PC-3 (cell line): ENCODE measurements at regions of chr22 and their contacts with region 1.

Region 1: DNA sequence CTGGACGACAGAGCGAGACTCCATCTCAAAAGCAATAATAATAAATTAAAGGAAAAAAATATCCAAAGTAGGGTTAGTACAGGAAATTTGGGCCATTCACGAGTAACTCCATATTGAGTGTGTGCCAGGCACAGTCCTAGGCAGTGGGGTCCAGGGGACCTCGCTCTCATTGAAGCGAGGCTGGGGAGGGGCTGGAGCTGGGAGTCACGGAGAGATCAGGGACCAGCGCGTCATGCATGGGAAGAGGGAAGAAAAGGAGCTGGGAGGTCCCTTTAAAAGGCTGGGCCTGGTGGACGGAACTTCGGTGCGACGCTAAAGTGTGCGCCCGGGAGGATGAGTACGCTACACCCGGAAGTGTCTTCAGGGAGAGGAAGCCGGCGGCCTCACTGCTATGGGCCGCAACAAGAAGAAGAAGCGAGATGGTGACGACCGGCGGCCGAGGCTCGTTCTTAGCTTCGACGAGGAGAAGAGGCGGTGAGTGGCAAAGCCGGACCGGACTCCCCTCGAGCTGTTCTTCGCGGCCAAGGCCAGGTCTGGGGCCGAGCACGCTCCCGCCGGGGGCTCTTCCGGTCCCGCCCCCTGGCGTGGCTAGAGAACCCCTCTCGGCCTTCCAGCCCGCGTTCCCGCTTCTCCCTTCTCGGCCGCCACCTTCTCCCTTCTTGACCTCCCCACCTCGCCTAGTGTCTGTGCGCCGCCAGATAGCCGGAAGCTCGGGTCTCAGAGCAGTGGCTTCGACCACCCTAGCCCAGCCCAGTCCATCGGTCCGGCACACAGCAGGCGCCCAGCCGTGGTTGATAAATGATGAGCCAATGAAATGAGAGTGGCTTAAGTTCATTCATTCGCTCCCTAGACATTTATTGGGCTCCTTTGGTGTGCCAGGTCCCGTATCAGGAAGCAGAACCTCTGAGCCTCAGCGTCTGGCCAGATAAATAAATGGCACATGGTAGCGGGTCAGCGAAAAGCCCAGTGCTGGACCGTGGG is at the start of gene NOL12:
- DNase-seq: peak; percentile 87
- ATAC-seq: peak; percentile 66
- H3K4me3 ChIP-seq: peak within 1 kb of the TSS; percentile 100
- H3K27ac ChIP-seq: peak within 1 kb of the TSS; percentile 77
- H3K4me1 ChIP-seq: peaks cover 17% of the 10 kb centered on the region
- H3K27me3 ChIP-seq: no peaks in the 10 kb centered on the region
- CTCF ChIP-seq: no peak
- total RNA-seq, gene NOL12: 32.9 and 45.4 TPM in 2 replicates

Region 2: GRCh38 chr22:37544955-37545699 is 141.2 kb before region 1 on chr22:
- CTCF ChIA-PET with region 1: no interaction called
- POLR2A ChIA-PET with region 1: interaction called, 10 read pairs
- intact Hi-C with region 1: no loop called
- DNase-seq: peak; percentile 78
- ATAC-seq: peak; percentile 39
- H3K4me3 ChIP-seq: no peak overlapping the region
- H3K27ac ChIP-seq: no peak overlapping the region
- H3K4me1 ChIP-seq: peaks cover 28% of the 10 kb centered on the region
- H3K27me3 ChIP-seq: no peaks in the 10 kb centered on the region
- CTCF ChIP-seq: peak; percentile 74

Region 3: GRCh38 chr22:37643225-37643847 is 43.0 kb before region 1 on chr22:
- CTCF ChIA-PET with region 1: interaction called, 15 read pairs
- POLR2A ChIA-PET with region 1: no interaction called
- intact Hi-C with region 1: loop called (anchors 2 kb)
- DNase-seq: peak; percentile 80
- ATAC-seq: peak; percentile 85
- H3K4me3 ChIP-seq: no peak overlapping the region
- H3K27ac ChIP-seq: no peak overlapping the region
- H3K4me1 ChIP-seq: peaks cover 9% of the 10 kb centered on the region; the same call in 1 of the 2 replicates
- H3K27me3 ChIP-seq: no peaks in the 10 kb centered on the region
- CTCF ChIP-seq: peak; percentile 82

Region 4: DNA sequence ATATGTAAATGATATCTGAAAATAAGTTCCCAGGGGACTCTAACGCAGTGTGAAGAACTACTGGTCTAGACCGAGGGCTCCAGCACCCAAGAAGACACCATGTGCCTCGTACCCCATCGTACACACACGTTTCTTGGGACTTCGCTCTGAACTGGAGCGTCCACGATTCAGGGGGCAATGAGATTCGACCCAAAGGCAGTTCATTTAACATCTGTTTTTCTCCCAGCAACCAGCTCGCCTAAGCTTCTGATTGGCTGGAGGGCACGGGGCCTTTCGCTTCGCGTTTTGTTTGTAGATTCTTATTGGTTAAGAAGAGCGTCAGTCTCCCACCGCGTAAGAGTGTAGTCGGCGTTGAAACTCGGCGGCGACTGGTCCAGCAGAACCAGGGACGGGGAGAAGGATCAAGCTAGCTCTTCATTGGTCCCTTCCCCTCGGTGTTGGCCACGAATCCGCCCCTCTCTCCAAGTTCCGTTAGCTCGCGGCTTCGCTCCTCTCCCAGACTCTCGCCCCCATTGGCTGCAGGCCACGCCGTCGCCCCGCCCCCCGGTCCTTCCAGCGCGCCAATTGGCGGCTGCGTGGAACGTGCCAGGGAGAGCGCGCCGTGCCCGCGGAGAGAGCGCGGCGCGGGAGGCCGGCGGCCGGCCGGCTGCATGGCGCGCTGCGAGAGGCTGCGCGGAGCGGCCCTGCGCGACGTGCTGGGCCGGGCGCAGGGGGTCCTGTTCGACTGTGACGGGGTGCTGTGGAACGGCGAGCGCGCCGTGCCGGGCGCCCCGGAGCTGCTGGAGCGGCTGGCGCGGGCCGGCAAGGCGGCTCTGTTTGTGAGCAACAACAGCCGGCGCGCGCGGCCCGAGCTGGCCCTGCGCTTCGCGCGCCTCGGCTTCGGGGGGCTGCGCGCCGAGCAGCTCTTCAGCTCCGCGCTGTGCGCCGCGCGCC is 27.9 kb before region 1 on chr22 and contains the start of gene PDXP:
- CTCF ChIA-PET with region 1: interaction called, 6 read pairs
- POLR2A ChIA-PET with region 1: interaction called, 14 read pairs
- intact Hi-C with region 1: no loop called
- DNase-seq: peak; percentile 98
- ATAC-seq: peak; percentile 96
- H3K4me3 ChIP-seq: peak within 1 kb of the TSS; percentile 88
- H3K27ac ChIP-seq: 0 out of 2 replicates have a peak within 1 kb of the TSS, but pooled peaks have one; percentile 6
- H3K4me1 ChIP-seq: peaks cover 26% of the 10 kb centered on the region
- H3K27me3 ChIP-seq: no peaks in the 10 kb centered on the region
- CTCF ChIP-seq: no peak
- total RNA-seq, gene PDXP: 36.9 and 51.3 TPM in 2 replicates

Region 5: GRCh38 chr22:37807410-37808293 is 121.4 kb after region 1 on chr22 and contains the start of gene GCAT:
- CTCF ChIA-PET with region 1: no interaction called
- POLR2A ChIA-PET with region 1: no interaction called
- intact Hi-C with region 1: loop called (anchors 10 kb)
- DNase-seq: peak; percentile 91
- ATAC-seq: peak; percentile 65
- H3K4me3 ChIP-seq: peak within 1 kb of the TSS; percentile 100
- H3K27ac ChIP-seq: peak within 1 kb of the TSS; percentile 66
- H3K4me1 ChIP-seq: peaks cover 17% of the 10 kb centered on the region
- H3K27me3 ChIP-seq: no peaks in the 10 kb centered on the region
- CTCF ChIP-seq: no peak
- total RNA-seq, gene GCAT: 26.0 and 33.3 TPM in 2 replicates